H1 (cell line): ENCODE measurements at regions of chr20 and their contacts with region 1.

Region 1: GRCh38 chr20:49418809-49419208 is 63.7 kb downstream of the KCNB1 start:
- DNase-seq: no peak
- H3K4me3 ChIP-seq: no peak overlapping the region
- H3K27ac ChIP-seq: no peak overlapping the region
- H3K4me1 ChIP-seq: no peaks in the 10 kb centered on the region; a peak in 1 of 7 replicates
- H3K27me3 ChIP-seq: no peaks in the 10 kb centered on the region
- CTCF ChIP-seq: no peak
- EP300 ChIP-seq: no peak
- POLR2A ChIP-seq: no peak
- RAD21 ChIP-seq: no peak

Region 2: DNA sequence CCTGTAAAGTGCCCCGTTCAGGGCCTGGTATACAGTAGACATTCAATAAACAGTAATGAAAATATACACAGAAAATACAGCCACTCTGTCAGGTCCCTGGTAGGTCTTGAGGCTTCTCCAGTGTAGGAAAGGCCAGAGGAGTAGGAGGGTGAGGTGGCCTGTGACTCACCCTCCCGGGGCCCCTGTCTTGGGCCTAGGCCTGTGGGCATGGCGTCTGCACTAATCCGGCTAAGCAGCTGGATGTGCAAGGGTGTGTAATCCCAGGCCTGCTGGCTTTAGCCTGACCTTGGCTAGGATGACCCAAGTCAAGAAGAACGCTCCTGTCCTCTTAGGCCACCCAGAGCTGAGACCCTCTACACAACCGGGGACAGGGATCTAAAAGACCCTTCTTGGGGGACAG is 21.3 kb before region 1 on chr20:
- CTCF ChIA-PET with region 1: interaction called, 16 read pairs
- POLR2A ChIA-PET with region 1: interaction called, 3 read pairs
- DNase-seq: no peak
- H3K4me3 ChIP-seq: no peak overlapping the region
- H3K27ac ChIP-seq: no peak overlapping the region
- H3K4me1 ChIP-seq: no peaks in the 10 kb centered on the region
- H3K27me3 ChIP-seq: no peaks in the 10 kb centered on the region; a peak in 3 of 7 replicates
- CTCF ChIP-seq: no peak
- EP300 ChIP-seq: no peak
- POLR2A ChIP-seq: no peak
- RAD21 ChIP-seq: no peak

Region 3: GRCh38 chr20:49497398-49497669 is 78.5 kb after region 1 on chr20:
- CTCF ChIA-PET with region 1: no interaction called
- POLR2A ChIA-PET with region 1: no interaction called
- DNase-seq: no peak
- H3K4me3 ChIP-seq: no peak overlapping the region
- H3K27ac ChIP-seq: no peak overlapping the region
- H3K4me1 ChIP-seq: no peaks in the 10 kb centered on the region; a peak in 1 of 7 replicates
- H3K27me3 ChIP-seq: no peaks in the 10 kb centered on the region
- CTCF ChIP-seq: no peak
- EP300 ChIP-seq: no peak
- POLR2A ChIP-seq: no peak
- RAD21 ChIP-seq: no peak